ENCODE measurements at regions of chr1 and their contacts with region 1.

Region 1: GRCh38 chr1:214261206-214262123 is 19.5 kb upstream of the SMYD2 start:
- DNase-seq: peak; percentile 78
- ATAC-seq: peak; percentile 90
- H3K4me3 ChIP-seq: no peak overlapping the region
- H3K4me3 Mint-ChIP-seq: no peak overlapping the region
- H3K27ac ChIP-seq: no peak overlapping the region
- H3K27ac Mint-ChIP-seq: no peak overlapping the region
- H3K4me1 ChIP-seq: peaks cover 3 to 4% of the 10 kb centered on the region in 2 donors
- H3K4me1 Mint-ChIP-seq: peaks cover 1% of the 10 kb centered on the region
- H3K27me3 ChIP-seq: peaks cover 0 to 43% (median 29%) of the 10 kb centered on the region in 4 experiments
- H3K27me3 Mint-ChIP-seq: peaks cover 64% of the 10 kb centered on the region
- CTCF ChIP-seq: peak; percentile 99

Region 2: GRCh38 chr1:214213136-214213535 is 48.3 kb before region 1 on chr1:
- CTCF ChIA-PET with region 1: interaction called, 12 read pairs
- POLR2A ChIA-PET with region 1: no interaction called
- intact Hi-C with region 1: no loop called
- DNase-seq: no peak
- ATAC-seq: no peak
- H3K4me3 ChIP-seq: no peak overlapping the region
- H3K4me3 Mint-ChIP-seq: no peak overlapping the region
- H3K27ac ChIP-seq: no peak overlapping the region
- H3K27ac Mint-ChIP-seq: no peak overlapping the region
- H3K4me1 ChIP-seq: peaks cover 3% of the 10 kb centered on the region in 2 donors
- H3K4me1 Mint-ChIP-seq: peaks cover 2% of the 10 kb centered on the region
- H3K27me3 ChIP-seq: no peaks in the 10 kb centered on the region
- H3K27me3 Mint-ChIP-seq: peaks cover 18% of the 10 kb centered on the region
- CTCF ChIP-seq: no peak

Region 3: DNA sequence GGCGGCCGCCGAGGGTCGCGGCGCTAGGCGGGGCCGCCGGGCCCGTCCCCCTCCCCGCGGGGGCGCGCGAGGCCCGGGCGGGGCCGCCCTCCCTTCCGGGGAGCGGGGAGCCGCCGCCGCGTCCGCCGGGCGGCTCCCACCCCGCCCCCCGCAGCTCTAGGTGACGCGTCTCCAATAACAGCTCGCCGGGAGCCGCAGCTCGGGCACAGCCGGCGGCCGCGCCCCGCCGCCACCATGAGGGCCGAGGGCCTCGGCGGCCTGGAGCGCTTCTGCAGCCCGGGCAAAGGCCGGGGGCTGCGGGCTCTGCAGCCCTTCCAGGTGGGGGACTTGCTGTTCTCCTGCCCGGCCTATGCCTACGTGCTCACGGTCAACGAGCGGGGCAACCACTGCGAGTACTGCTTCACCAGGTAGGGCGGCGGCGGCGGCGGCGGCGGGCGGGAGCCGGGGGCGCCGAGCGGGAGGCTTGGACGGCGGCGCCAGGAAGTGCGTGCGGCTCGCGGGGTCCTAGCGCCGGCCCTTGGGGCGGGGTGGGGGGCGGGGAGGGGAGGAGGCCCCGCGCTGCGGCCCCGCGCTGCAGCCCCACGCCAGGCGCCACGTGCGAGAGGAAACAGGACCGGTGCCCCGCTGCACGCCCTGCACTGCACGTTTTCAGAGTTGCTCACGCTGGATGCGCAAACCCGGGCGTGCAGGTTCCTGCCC is 19.7 kb after region 1 on chr1 and contains the start of gene SMYD2:
- CTCF ChIA-PET with region 1: interaction called, 46 read pairs
- POLR2A ChIA-PET with region 1: no interaction called
- intact Hi-C with region 1: loop called (anchors 1 kb)
- DNase-seq: peak; percentile 79
- ATAC-seq: peak; percentile 77
- H3K4me3 ChIP-seq: peak within 1 kb of the TSS; percentile 56 to 86 (median 69)
- H3K4me3 Mint-ChIP-seq: peak within 1 kb of the TSS; percentile 89
- H3K27ac ChIP-seq: peak within 1 kb of the TSS; percentile 58 to 74
- H3K27ac Mint-ChIP-seq: peak within 1 kb of the TSS; percentile 78
- H3K4me1 ChIP-seq: peaks cover 17 to 28% of the 10 kb centered on the region in 2 donors
- H3K4me1 Mint-ChIP-seq: peaks cover 29% of the 10 kb centered on the region
- H3K27me3 ChIP-seq: no peaks in the 10 kb centered on the region
- H3K27me3 Mint-ChIP-seq: no peaks in the 10 kb centered on the region
- CTCF ChIP-seq: no peak
- total RNA-seq, gene SMYD2: 29.1 and 29.5 TPM in 2 replicates

Region 4: DNA sequence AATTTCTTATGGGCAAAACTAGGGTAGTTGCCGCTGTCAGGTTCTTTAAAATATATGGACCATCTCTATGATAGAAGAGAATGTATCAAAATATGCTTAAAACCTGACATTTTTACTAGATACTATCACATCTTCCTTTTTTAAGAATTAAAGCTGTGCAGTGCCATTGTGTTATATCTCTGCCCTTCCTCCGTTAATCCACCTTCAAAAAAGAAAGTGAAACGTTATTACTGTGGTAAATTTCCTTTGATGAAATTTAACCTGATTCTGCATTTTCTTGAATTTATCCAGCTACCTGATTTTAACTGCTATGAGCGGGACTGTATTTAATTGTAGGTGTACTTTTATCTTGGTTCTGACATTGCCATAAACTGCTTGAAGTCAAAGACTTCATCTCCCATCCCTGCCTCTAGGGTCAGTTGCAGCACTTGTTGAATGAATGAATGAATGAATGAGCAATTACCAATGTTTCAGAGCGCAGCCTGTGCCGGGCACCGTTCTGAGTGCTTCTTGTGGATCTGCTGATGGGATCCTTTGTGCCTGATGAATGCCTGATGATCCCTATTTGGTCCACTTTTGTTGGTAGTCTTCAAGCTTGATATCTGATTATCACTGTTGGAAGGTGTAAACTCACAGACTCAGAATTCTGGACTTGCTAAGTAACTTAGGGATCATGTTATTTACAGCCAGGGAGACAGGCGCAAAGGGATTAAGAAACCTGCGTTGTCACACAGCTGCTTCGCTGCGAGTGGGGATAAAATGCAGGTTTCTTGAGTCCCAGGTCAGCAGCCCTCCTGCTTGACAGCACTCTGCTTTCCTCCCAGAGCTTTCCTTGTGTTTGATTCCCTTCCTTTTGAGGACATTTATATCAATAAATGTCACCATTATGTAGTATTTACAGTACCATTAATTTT is 49.6 kb after region 1 on chr1:
- CTCF ChIA-PET with region 1: interaction called, 27 read pairs
- POLR2A ChIA-PET with region 1: no interaction called
- intact Hi-C with region 1: no loop called
- DNase-seq: no peak
- ATAC-seq: no peak
- H3K4me3 ChIP-seq: peak overlapping the region in 1 of 5 experiments; percentile 3
- H3K4me3 Mint-ChIP-seq: no peak overlapping the region
- H3K27ac ChIP-seq: no peak overlapping the region
- H3K27ac Mint-ChIP-seq: no peak overlapping the region
- H3K4me1 ChIP-seq: peaks cover 0 to 5% of the 10 kb centered on the region in 2 donors
- H3K4me1 Mint-ChIP-seq: peaks cover 14% of the 10 kb centered on the region
- H3K27me3 ChIP-seq: no peaks in the 10 kb centered on the region
- H3K27me3 Mint-ChIP-seq: no peaks in the 10 kb centered on the region
- CTCF ChIP-seq: no peak

Region 5: DNA sequence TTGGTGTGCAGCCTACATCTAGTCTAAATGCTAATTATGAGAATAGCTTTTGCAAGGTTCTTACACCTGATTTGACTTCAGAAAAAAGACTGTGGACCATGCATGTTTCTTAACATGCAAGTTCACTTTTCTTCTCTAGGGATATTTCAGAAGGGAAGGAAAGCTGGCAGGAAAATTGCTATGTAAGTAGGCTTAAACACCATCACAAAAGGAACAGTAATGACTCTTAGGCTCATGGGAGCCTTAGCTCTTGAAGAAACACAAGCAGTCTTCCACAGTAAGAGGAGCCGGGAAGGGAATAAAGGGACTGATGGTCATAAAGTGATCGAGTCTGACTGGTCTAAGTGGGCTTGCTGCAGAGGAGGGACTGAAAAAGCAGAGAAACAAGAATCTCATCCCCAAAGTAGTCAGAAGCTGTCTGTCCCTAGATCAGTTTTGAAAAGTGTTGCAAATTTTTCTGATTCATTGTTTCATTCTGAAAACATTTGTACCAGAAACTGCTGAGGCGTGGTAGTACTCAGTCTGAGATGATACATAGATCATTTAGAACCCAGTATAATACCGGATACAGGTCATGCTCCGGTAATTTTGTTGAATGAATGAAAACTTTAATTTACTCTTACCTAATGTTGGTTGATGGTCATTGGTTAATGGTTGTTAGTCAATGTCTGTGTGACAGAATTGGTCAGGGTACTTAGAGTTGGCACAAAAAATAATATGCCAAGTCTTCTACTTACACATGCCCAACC is 60.4 kb after region 1 on chr1:
- CTCF ChIA-PET with region 1: interaction called, 643 read pairs
- POLR2A ChIA-PET with region 1: no interaction called
- intact Hi-C with region 1: no loop called
- DNase-seq: no peak
- ATAC-seq: no peak
- H3K4me3 ChIP-seq: no peak overlapping the region
- H3K4me3 Mint-ChIP-seq: no peak overlapping the region
- H3K27ac ChIP-seq: no peak overlapping the region
- H3K27ac Mint-ChIP-seq: no peak overlapping the region
- H3K4me1 ChIP-seq: peaks cover 0 to 2% of the 10 kb centered on the region in 2 donors
- H3K4me1 Mint-ChIP-seq: peaks cover 17% of the 10 kb centered on the region
- H3K27me3 ChIP-seq: no peaks in the 10 kb centered on the region
- H3K27me3 Mint-ChIP-seq: no peaks in the 10 kb centered on the region
- CTCF ChIP-seq: no peak

Region 6: GRCh38 chr1:214632091-214632490 is 370.6 kb after region 1 on chr1:
- CTCF ChIA-PET with region 1: interaction called, 4 read pairs
- POLR2A ChIA-PET with region 1: no interaction called
- intact Hi-C with region 1: loop called (anchors 2 kb)
- DNase-seq: peak; percentile 8
- ATAC-seq: no peak
- H3K4me3 ChIP-seq: no peak overlapping the region
- H3K4me3 Mint-ChIP-seq: no peak overlapping the region
- H3K27ac ChIP-seq: no peak overlapping the region
- H3K27ac Mint-ChIP-seq: no peak overlapping the region
- H3K4me1 ChIP-seq: no peaks in the 10 kb centered on the region
- H3K4me1 Mint-ChIP-seq: no peaks in the 10 kb centered on the region
- H3K27me3 ChIP-seq: no peaks in the 10 kb centered on the region
- H3K27me3 Mint-ChIP-seq: no peaks in the 10 kb centered on the region
- CTCF ChIP-seq: no peak

Region 7: DNA sequence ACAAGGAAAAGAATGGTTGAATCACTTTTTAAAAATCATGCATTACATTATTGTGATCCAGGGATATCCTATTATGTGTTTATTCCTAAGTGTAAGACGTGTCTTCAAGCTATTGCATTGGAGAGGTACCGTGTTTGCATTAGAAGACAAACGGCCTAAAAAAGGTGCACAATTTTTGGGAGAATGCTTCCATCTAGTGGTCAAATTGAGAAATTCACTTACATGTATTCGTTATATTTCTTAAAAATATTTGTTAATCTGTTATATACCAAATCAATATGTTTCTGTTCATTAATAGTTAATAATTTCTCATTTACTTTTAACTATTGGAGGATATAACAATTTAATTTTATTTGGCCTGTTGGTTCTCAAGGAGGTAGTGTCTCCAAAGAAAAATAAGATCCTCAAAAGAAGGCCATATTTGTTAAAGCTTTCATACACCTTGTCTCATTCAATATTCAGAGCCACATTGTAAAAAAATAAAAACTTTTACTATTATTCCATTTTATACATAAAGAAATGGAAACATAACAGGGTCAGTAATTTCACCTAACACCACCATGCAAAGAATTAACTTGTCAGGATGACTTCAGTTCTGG is 1265.2 kb after region 1 on chr1:
- CTCF ChIA-PET with region 1: no interaction called
- POLR2A ChIA-PET with region 1: no interaction called
- intact Hi-C with region 1: loop called (anchors 5 kb)
- DNase-seq: peak; percentile 45
- ATAC-seq: no peak
- H3K4me3 ChIP-seq: no peak overlapping the region
- H3K4me3 Mint-ChIP-seq: no peak overlapping the region
- H3K27ac ChIP-seq: no peak overlapping the region
- H3K27ac Mint-ChIP-seq: no peak overlapping the region
- H3K4me1 ChIP-seq: no peaks in the 10 kb centered on the region
- H3K4me1 Mint-ChIP-seq: no peaks in the 10 kb centered on the region
- H3K27me3 ChIP-seq: peaks cover 0 to 8% (median 0%) of the 10 kb centered on the region in 4 experiments
- H3K27me3 Mint-ChIP-seq: peaks cover 3% of the 10 kb centered on the region
- CTCF ChIP-seq: peak; percentile 81

Measured in B cell (primary cell).